ENCODE measurements at regions of chr4 and their contacts with region 1.

Region 1: GRCh38 chr4:69689599-69689998 is 36.6 kb upstream of the UGT2A1 start:
- DNase-seq: no peak
- ATAC-seq: peak; percentile 37
- H3K4me3 Mint-ChIP-seq: no peak overlapping the region
- H3K27ac Mint-ChIP-seq: no peak overlapping the region
- H3K4me1 Mint-ChIP-seq: no peaks in the 10 kb centered on the region
- H3K27me3 Mint-ChIP-seq: peaks cover 1% of the 10 kb centered on the region
- CTCF ChIP-seq: peak; percentile 77

Region 2: DNA sequence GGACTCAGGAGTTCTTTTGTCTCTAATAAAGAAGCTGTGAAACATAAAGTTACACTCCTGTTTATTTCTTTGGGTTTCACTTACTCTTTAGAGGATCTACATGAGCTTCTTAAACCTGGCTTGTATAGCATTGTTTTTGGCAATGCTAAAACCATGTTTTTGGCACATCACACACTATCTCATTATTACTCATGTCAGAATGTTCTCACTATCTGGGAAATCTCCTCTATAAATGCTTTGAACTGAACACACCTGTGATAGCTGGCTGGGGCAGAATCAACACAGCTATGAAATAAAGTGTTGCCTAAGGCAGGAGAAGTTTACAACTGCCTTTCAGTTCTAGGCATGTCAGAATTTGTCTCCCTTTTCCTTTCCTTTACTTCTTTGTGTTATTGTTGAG is 18.2 kb after region 1 on chr4:
- CTCF ChIA-PET with region 1: no interaction called
- POLR2A ChIA-PET with region 1: no interaction called
- intact Hi-C with region 1: no loop called
- DNase-seq: no peak
- ATAC-seq: no peak
- H3K4me3 Mint-ChIP-seq: no peak overlapping the region
- H3K27ac Mint-ChIP-seq: no peak overlapping the region
- H3K4me1 Mint-ChIP-seq: no peaks in the 10 kb centered on the region
- H3K27me3 Mint-ChIP-seq: no peaks in the 10 kb centered on the region
- CTCF ChIP-seq: no peak

Region 3: DNA sequence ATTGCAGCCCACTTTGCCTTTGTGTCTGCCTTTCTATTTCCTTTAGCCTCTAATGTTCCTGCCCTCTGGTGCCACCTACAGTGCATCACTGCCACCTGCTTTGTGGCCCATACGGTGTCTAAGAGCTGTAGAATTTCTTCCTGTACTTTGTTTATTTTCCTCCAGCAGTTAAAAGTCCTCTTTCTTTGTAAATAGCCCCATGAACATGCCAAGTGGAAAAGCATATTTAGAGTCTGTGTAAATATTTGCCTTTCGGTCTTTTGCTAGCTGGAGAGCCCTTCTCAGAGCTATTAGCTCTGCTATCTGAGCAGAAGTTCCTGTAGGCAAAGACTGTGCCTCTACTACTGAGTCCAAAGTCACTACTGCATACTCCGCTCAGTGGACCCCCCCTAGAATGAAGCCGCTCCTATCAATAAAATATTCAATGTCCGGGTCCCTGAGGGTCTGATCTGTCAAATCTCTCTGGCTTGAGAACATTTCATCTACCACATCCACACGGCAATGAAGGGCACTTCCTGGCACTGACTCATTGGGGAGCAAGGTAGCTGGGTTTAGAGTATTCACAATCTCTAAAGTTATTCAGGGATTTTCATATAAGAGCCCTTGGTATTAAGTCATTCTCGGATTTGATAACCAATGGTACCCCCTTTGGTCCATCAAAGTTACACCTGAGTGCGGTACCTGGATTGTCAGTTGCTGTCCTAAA is 134.0 kb after region 1 on chr4:
- CTCF ChIA-PET with region 1: interaction called, 14 read pairs
- POLR2A ChIA-PET with region 1: no interaction called
- intact Hi-C with region 1: loop called (anchors 1 kb)
- DNase-seq: peak; percentile 70
- ATAC-seq: peak; percentile 88
- H3K4me3 Mint-ChIP-seq: no peak overlapping the region
- H3K27ac Mint-ChIP-seq: no peak overlapping the region
- H3K4me1 Mint-ChIP-seq: peaks cover 6% of the 10 kb centered on the region
- H3K27me3 Mint-ChIP-seq: no peaks in the 10 kb centered on the region
- CTCF ChIP-seq: peak; percentile 66

Region 4: GRCh38 chr4:69881173-69881773 is 191.7 kb after region 1 on chr4:
- CTCF ChIA-PET with region 1: interaction called, 12 read pairs
- POLR2A ChIA-PET with region 1: no interaction called
- intact Hi-C with region 1: loop called (anchors 2 kb)
- DNase-seq: peak; percentile 31
- ATAC-seq: peak; percentile 64
- H3K4me3 Mint-ChIP-seq: no peak overlapping the region
- H3K27ac Mint-ChIP-seq: no peak overlapping the region
- H3K4me1 Mint-ChIP-seq: no peaks in the 10 kb centered on the region
- H3K27me3 Mint-ChIP-seq: no peaks in the 10 kb centered on the region
- CTCF ChIP-seq: peak; percentile 76

Measured in activated CD8-positive, alpha-beta T cell treated with anti-CD3 and anti-CD28 coated beads for 36 hours (primary cell).